HepG2 (cell line): ENCODE measurements at regions of chr12 and their contacts with region 1.

Region 1: DNA sequence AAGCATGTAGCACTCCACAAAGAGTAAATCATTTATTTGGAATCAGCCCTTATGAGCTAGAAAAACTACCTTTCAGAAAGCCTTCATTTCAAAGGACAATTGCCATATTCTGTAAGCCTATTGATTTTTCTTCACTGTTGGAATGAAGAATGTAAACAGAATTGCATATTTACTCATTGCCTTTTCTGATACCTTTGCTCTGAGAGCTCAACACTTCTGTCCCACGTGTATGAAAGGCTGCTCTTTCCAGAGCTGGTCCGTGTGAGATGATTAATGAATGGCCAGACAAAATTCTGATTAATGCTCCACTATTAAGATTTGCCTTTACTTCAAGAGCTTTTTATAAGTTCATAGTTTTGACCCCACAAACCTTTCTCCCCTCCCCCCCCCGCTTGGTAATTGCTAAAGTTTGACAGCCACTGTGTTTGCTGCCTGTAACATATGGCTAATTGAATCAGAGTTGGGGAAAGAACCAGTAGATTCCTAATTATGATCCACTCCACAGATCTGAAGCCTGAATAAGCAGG is 63.0 kb upstream of the PLEKHA5 start:
- DNase-seq: peak; percentile 89
- ATAC-seq: peak; percentile 99
- H3K4me3 ChIP-seq: peak overlapping the region in 2 of 3 experiments; percentile 29; a peak in 3 of 6 replicates
- H3K27ac ChIP-seq: peak overlapping the region; percentile 72
- H3K4me1 ChIP-seq: peaks cover 36% of the 10 kb centered on the region
- H3K27me3 ChIP-seq: no peaks in the 10 kb centered on the region
- CTCF ChIP-seq: no peak
- EP300 ChIP-seq: peak; percentile 57 to 97; a peak in 3 of 4 replicates
- POLR2A ChIP-seq: 0 out of 4 replicates have a peak, but pooled peaks of 1 of the 2 experiments have one; percentile 27
- RAD21 ChIP-seq: 0 out of 2 replicates have a peak, but pooled peaks have one; percentile 38

Region 2: DNA sequence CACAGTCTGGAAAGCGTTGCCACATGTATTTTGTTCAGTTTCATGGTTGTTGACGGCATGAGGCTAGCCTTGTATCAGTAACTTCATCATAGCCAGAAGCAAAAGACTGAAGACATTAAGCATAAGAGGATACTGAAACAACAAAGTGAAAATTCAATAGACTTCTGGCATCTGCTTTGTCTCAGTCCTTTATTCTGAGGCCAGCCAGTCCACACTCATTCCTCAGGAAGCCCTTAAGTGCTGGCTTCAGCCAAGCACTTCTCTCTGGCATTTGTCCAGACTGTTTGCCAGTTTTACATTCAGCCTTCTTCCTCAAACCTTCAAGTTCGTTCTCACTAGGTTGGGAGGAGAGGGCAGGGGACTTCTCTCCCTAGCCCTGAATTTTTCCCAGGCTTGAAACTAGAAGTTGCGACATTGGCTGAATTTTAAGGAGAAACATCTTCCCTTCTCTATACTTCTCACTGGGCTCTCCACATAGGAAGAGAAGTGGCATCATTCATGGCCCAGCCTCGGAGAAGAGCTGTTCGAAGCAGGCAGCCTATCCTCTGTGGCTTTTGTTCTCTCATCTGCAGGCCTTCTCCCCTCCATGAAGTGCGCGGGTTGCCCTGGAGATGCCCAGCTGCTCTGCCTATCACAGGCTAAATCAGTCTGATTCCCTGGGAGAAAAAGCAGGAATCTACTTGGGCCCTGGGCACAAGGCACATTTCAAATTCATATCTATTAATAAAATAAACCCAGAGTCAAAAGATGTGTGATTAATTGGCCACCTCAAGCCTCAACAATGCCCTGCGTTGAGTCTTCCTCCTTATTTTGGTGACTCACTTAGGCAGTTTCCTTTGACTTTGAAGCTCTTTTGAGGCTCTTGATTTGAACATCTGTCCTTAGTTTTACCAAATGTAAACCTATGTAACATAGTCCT is 67.9 kb before region 1 on chr12:
- CTCF ChIA-PET with region 1: no interaction called
- POLR2A ChIA-PET with region 1: no interaction called
- in situ Hi-C with region 1: no loop called
- intact Hi-C with region 1: no loop called
- DNase-seq: no peak
- ATAC-seq: no peak
- H3K4me3 ChIP-seq: no peak overlapping the region
- H3K27ac ChIP-seq: no peak overlapping the region
- H3K4me1 ChIP-seq: no peaks in the 10 kb centered on the region
- H3K27me3 ChIP-seq: no peaks in the 10 kb centered on the region; a peak in 1 of 5 replicates
- CTCF ChIP-seq: no peak
- EP300 ChIP-seq: no peak
- POLR2A ChIP-seq: no peak
- RAD21 ChIP-seq: no peak

Region 3: DNA sequence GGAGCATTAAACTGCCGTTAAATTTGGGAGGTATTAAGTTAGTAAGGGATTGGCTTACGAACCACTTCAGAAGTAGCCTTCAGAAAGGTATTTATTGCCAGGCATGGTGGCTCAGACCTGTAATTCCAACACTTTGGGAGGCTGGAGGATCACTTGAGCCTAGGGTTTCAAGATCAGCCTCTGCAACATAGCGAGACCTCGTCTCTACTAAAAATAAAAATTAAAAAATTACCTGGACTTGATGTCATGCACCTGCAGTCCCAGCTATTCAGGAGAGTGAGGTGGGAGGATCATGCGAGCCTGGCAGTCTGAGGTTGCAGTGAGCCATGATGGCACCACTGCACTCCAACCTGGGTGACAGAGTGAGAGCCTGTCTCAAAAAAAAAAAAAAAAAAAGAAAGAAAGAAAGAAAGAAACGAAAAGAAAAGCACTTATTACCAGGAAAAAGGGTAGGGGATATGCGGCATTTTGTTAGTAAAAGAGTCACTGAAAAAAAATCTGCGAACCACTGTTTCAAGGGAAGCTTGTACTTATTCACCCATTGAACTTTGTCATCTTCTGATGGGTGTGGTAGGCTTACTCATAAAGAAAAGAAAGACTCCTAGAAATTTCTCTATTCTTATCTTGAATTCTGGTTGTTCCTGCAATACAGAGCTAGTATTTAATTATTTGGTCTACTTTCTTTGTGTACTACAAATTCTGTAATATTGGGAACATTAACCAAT is 29.4 kb after region 1 on chr12:
- CTCF ChIA-PET with region 1: no interaction called
- POLR2A ChIA-PET with region 1: interaction called, 15 read pairs
- in situ Hi-C with region 1: no loop called
- intact Hi-C with region 1: no loop called
- DNase-seq: no peak
- ATAC-seq: no peak
- H3K4me3 ChIP-seq: no peak overlapping the region
- H3K27ac ChIP-seq: no peak overlapping the region
- H3K4me1 ChIP-seq: peaks cover 33% of the 10 kb centered on the region
- H3K27me3 ChIP-seq: no peaks in the 10 kb centered on the region
- CTCF ChIP-seq: no peak
- EP300 ChIP-seq: no peak
- POLR2A ChIP-seq: no peak
- RAD21 ChIP-seq: no peak

Region 4: GRCh38 chr12:19390051-19390598 is 323.6 kb after region 1 on chr12:
- CTCF ChIA-PET with region 1: no interaction called
- POLR2A ChIA-PET with region 1: no interaction called
- in situ Hi-C with region 1: no loop called
- intact Hi-C with region 1: no loop called
- DNase-seq: no peak
- ATAC-seq: no peak
- H3K4me3 ChIP-seq: no peak overlapping the region
- H3K27ac ChIP-seq: no peak overlapping the region
- H3K4me1 ChIP-seq: 0 out of 2 replicates have a peak, but pooled peaks cover 9% of the 10 kb centered on the region
- H3K27me3 ChIP-seq: no peaks in the 10 kb centered on the region
- CTCF ChIP-seq: no peak
- EP300 ChIP-seq: no peak
- POLR2A ChIP-seq: no peak
- RAD21 ChIP-seq: no peak